ENCODE measurements at regions of chr9 and their contacts with region 1.

Region 1: DNA sequence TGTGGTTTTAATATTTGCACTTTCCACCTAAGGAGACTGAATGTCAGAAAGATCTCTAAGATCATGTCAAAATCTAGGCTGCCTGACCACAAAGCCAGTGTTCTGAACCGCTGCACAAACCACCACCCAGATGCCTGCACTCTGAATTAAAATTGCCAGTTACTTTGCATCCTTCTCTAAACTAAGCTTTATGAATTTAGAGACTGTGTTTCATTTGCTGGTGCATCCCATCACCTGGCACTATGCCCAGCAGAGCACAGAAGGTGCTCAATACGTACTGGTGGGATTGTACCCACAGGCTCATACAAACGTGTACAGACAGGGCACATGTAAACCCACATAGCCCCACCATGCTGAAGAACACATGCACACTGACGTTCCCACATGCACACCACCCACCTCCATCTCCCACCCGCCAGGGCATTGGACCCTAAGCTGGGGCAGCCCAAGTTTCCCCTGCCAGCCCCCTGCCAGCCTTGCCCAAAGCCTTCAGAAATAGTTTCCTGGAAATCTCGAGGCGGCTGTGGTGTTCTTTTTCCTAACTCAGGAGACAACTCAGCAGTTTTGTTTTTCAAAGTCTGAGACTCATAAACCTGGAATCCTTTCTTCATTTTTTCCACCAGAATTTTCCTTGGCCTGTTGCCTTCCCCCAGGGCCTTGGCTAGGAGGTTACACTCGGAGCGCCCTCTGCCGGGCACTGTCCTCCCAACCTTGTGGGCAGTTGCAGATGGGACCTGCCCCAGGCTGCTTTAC is 9.6 kb upstream of the TRAF1 start:
- DNase-seq: peak; percentile 72
- ATAC-seq: peak; percentile 37
- H3K4me3 Mint-ChIP-seq: peak overlapping the region; percentile 71
- H3K27ac Mint-ChIP-seq: peak overlapping the region; percentile 82
- H3K4me1 Mint-ChIP-seq: peaks cover 63% of the 10 kb centered on the region
- H3K27me3 Mint-ChIP-seq: no peaks in the 10 kb centered on the region
- CTCF ChIP-seq: peak; percentile 52

Region 2: DNA sequence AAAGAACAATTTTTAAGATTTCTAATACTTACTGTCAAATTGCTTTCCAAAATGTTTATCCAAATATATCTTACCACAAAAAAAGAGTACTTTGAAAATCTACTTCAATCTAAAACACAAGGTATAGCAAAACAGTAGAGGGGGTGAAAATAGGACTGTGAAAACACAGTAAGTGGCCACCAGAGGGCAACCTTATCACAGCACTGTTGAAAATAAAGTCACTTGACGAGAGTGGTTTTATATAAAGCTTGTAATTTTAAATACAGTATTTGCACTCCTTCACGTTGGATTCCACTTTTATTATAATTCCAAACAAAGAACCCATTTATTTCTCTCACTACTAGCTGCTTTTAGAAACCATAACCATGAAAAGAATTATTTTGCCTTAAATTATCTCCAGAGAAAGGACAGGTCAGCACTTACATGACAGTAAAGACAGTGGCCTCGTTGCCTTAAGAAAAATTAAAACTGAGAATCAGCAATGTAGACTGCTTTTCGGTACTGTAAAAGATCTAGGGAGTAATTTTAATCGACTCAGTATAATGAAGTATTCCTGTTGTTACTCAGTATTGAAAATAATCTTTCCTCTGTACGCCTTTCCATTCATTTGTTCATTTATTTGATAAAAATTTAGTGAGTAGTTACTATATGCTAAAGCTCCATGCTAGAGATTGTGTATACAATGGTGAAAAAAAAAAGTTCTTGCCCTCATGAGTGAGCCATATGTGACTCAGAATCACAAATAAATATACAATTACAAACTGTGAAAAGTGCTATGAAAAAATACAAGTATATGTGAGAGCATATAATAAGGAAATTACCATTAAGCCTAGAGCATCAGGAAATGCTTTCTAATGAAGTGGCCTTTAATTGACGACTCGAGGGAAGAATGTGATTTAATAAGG is 316.2 kb before region 1 on chr9:
- CTCF ChIA-PET with region 1: interaction called, 3 read pairs
- POLR2A ChIA-PET with region 1: no interaction called
- intact Hi-C with region 1: loop called (anchors 1 kb)
- DNase-seq: no peak
- ATAC-seq: peak; percentile 79
- H3K4me3 Mint-ChIP-seq: no peak overlapping the region
- H3K27ac Mint-ChIP-seq: no peak overlapping the region
- H3K4me1 Mint-ChIP-seq: peaks cover 2% of the 10 kb centered on the region
- H3K27me3 Mint-ChIP-seq: no peaks in the 10 kb centered on the region
- CTCF ChIP-seq: peak; percentile 99

Region 3: GRCh38 chr9:120792898-120793765 is 143.1 kb before region 1 on chr9 and contains the start of gene FBXW2:
- CTCF ChIA-PET with region 1: interaction called, 5 read pairs
- POLR2A ChIA-PET with region 1: interaction called, 9 read pairs
- intact Hi-C with region 1: loop called (anchors 1 kb)
- DNase-seq: peak; percentile 87
- ATAC-seq: peak; percentile 91
- H3K4me3 Mint-ChIP-seq: peak within 1 kb of the TSS; percentile 91
- H3K27ac Mint-ChIP-seq: peak within 1 kb of the TSS; percentile 89
- H3K4me1 Mint-ChIP-seq: peaks cover 38% of the 10 kb centered on the region
- H3K27me3 Mint-ChIP-seq: no peaks in the 10 kb centered on the region
- CTCF ChIP-seq: no peak
- total RNA-seq, gene FBXW2: 70.4 and 77.9 TPM in 2 replicates

Region 4: GRCh38 chr9:120875954-120876841 is 60.0 kb before region 1 on chr9:
- CTCF ChIA-PET with region 1: interaction called, 3 read pairs
- POLR2A ChIA-PET with region 1: interaction called, 10 read pairs
- intact Hi-C with region 1: loop called (anchors 1 kb)
- DNase-seq: peak; percentile 66
- ATAC-seq: peak; percentile 74
- H3K4me3 Mint-ChIP-seq: peak overlapping the region; percentile 83
- H3K27ac Mint-ChIP-seq: peak overlapping the region; percentile 80
- H3K4me1 Mint-ChIP-seq: peaks cover 54% of the 10 kb centered on the region
- H3K27me3 Mint-ChIP-seq: peaks cover 2% of the 10 kb centered on the region
- CTCF ChIP-seq: no peak

Region 5: GRCh38 chr9:120904061-120904977 is 31.9 kb before region 1 on chr9:
- CTCF ChIA-PET with region 1: interaction called, 8 read pairs
- POLR2A ChIA-PET with region 1: interaction called, 12 read pairs
- intact Hi-C with region 1: loop called (anchors 1 kb)
- DNase-seq: no peak
- ATAC-seq: peak; percentile 53
- H3K4me3 Mint-ChIP-seq: peak overlapping the region; percentile 24
- H3K27ac Mint-ChIP-seq: peak overlapping the region; percentile 74
- H3K4me1 Mint-ChIP-seq: peaks cover 68% of the 10 kb centered on the region
- H3K27me3 Mint-ChIP-seq: no peaks in the 10 kb centered on the region
- CTCF ChIP-seq: no peak

Region 6: DNA sequence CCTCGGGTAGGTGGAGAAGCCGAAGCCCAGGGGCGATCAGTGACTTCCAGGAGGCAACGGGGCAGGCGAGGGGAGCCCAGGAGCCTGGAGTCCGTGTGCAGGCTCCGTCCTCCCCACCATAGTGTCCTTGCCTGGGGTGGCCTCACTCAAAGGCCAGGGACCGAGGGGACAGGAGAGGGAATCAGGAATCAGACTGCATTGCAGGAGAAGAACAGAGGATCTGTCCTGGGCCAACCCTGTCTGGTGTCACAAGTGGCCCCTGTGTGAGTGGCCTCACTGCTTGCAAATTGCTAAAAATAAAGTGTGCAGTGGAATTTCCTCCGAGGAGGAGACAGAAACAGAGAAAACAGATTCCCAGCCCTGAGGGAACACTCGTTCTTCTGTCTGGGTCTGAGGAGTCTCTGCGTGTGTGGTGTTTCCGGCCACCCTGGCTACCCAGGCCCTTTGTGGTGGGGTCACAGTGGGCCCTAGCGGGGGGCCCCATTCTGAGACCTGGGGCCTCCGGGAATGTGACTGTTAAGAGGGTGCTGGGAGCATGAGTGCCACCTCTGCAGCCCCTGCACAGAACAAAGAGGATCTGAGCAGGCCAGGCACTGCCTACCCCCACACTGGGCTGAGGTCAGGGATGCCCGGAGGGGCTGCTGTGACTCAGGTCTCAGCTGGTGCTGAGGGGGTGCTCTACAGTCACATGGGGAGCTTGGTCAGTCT is 17.1 kb before region 1 on chr9:
- CTCF ChIA-PET with region 1: interaction called, 14 read pairs
- POLR2A ChIA-PET with region 1: interaction called, 120 read pairs
- intact Hi-C with region 1: loop called (anchors 1 kb)
- DNase-seq: no peak
- ATAC-seq: no peak
- H3K4me3 Mint-ChIP-seq: peak overlapping the region; percentile 46
- H3K27ac Mint-ChIP-seq: peak overlapping the region; percentile 99
- H3K4me1 Mint-ChIP-seq: peaks cover 80% of the 10 kb centered on the region
- H3K27me3 Mint-ChIP-seq: no peaks in the 10 kb centered on the region
- CTCF ChIP-seq: no peak